ENCODE measurements at regions of chr20 and their contacts with region 1.

Region 1: GRCh38 chr20:24992487-24993205 is at the start of gene APMAP:
- DNase-seq: peak; percentile 88 to 94 (median 94)
- H3K4me3 ChIP-seq: peak within 1 kb of the TSS; percentile 55 to 89 (median 85)
- H3K4me3 Mint-ChIP-seq: peak within 1 kb of the TSS; percentile 96 to 97
- H3K27ac ChIP-seq: peak within 1 kb of the TSS; percentile 87 to 98
- H3K27ac Mint-ChIP-seq: peak within 1 kb of the TSS; percentile 94 to 98 (median 97)
- H3K4me1 ChIP-seq: peaks cover 46 to 63% of the 10 kb centered on the region in 2 donors
- H3K4me1 Mint-ChIP-seq: peaks cover 69% of the 10 kb centered on the region
- H3K27me3 ChIP-seq: no peaks in the 10 kb centered on the region
- H3K27me3 Mint-ChIP-seq: peaks cover 2 to 5% (median 5%) of the 10 kb centered on the region in 3 donors
- CTCF ChIP-seq: no peak
- polyA plus RNA-seq, gene APMAP: 26.9 to 74.0 (median 73.2) TPM

Region 2: GRCh38 chr20:25065625-25066338 is 73.1 kb after region 1 on chr20:
- intact Hi-C with region 1: loop called (anchors 1 to 2 kb)
- DNase-seq: peak; percentile 59 to 76 (median 67)
- H3K4me3 ChIP-seq: no peak overlapping the region
- H3K4me3 Mint-ChIP-seq: no peak overlapping the region
- H3K27ac ChIP-seq: no peak overlapping the region
- H3K27ac Mint-ChIP-seq: no peak overlapping the region
- H3K4me1 ChIP-seq: no peaks in the 10 kb centered on the region
- H3K4me1 Mint-ChIP-seq: peaks cover 4% of the 10 kb centered on the region
- H3K27me3 ChIP-seq: peaks cover 4 to 15% of the 10 kb centered on the region in 2 donors
- H3K27me3 Mint-ChIP-seq: peaks cover 12 to 15% (median 13%) of the 10 kb centered on the region in 3 donors
- CTCF ChIP-seq: peak; percentile 82

Region 3: GRCh38 chr20:25247956-25248785 is 255.5 kb after region 1 on chr20 and contains the start of gene PYGB:
- intact Hi-C with region 1: loop called (anchors 5 kb)
- DNase-seq: peak; percentile 84 to 85 (median 84)
- H3K4me3 ChIP-seq: peak within 1 kb of the TSS; percentile 55 to 86 (median 80)
- H3K4me3 Mint-ChIP-seq: peak within 1 kb of the TSS; percentile 95 to 96
- H3K27ac ChIP-seq: peak within 1 kb of the TSS; percentile 78 to 89
- H3K27ac Mint-ChIP-seq: peak within 1 kb of the TSS; percentile 89 to 96 (median 94)
- H3K4me1 ChIP-seq: peaks cover 20 to 24% of the 10 kb centered on the region in 2 donors
- H3K4me1 Mint-ChIP-seq: peaks cover 43% of the 10 kb centered on the region
- H3K27me3 ChIP-seq: peaks cover 0 to 2% of the 10 kb centered on the region in 2 donors
- H3K27me3 Mint-ChIP-seq: peaks cover 10 to 16% (median 12%) of the 10 kb centered on the region in 3 donors
- CTCF ChIP-seq: no peak
- polyA plus RNA-seq, gene PYGB: 26.6 to 33.2 (median 26.7) TPM

Region 4: DNA sequence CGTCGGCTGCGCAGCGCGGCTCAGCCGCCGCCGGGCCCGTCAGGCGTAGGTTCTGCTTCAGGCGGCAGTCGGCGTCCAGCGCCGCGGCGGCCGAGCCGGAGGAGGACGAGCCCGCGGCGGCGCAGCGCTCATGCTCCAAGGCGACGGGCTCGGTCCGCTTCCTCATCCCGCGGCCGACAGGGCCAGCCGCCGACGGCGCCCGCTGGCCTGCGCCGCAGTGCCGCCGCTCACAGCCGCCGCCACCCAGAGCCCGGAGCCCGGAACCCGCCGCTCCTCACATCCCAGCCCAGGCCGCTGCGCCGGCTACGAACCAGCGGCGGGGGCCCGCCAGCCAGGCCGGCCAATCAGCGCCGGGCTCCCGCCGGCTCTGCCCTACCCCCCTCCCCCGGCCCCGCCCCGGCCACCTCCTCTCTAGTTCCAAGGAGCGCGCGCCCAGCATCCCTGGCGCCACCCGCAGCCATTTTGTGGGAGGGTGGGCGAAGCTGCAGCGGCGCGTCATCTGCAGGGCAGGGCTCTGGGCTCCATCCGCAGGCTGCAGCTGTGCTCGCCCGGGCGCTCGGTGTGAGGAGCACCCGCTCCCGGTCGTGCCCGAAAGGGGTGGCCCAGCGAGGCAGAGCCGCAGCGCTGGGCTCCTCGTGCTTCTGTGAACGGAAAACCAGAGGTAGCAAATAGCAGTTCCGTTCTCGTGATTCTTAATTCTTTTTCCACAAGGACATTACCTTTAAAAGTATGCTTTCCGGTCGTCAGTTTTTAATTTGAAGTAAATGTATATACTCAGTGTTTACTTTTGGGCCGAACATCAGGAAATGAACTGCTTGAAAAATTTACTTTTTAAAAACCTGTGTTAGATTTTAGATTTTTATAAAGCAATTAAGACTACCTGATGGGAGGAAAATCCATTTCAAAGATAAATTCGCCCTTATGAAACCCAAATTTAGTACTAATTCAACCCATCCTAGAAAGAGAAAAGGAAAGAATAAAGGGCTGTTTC is 398.2 kb after region 1 on chr20 and contains the start of gene ABHD12:
- intact Hi-C with region 1: loop called in 1 of 2 experiments (anchors 10 kb)
- DNase-seq: peak; percentile 90 to 94 (median 93)
- H3K4me3 ChIP-seq: peak within 1 kb of the TSS; percentile 72 to 79 (median 79)
- H3K4me3 Mint-ChIP-seq: peak within 1 kb of the TSS; percentile 84 to 91
- H3K27ac ChIP-seq: peak within 1 kb of the TSS; percentile 64 to 86
- H3K27ac Mint-ChIP-seq: peak within 1 kb of the TSS; percentile 78 to 93 (median 89)
- H3K4me1 ChIP-seq: peaks cover 10 to 20% of the 10 kb centered on the region in 2 donors
- H3K4me1 Mint-ChIP-seq: peaks cover 12% of the 10 kb centered on the region
- H3K27me3 ChIP-seq: no peaks in the 10 kb centered on the region
- H3K27me3 Mint-ChIP-seq: peaks cover 0 to 2% (median 0%) of the 10 kb centered on the region in 3 donors
- CTCF ChIP-seq: no peak
- polyA plus RNA-seq, gene ABHD12: 20.3 to 34.5 (median 32.1) TPM

Region 5: DNA sequence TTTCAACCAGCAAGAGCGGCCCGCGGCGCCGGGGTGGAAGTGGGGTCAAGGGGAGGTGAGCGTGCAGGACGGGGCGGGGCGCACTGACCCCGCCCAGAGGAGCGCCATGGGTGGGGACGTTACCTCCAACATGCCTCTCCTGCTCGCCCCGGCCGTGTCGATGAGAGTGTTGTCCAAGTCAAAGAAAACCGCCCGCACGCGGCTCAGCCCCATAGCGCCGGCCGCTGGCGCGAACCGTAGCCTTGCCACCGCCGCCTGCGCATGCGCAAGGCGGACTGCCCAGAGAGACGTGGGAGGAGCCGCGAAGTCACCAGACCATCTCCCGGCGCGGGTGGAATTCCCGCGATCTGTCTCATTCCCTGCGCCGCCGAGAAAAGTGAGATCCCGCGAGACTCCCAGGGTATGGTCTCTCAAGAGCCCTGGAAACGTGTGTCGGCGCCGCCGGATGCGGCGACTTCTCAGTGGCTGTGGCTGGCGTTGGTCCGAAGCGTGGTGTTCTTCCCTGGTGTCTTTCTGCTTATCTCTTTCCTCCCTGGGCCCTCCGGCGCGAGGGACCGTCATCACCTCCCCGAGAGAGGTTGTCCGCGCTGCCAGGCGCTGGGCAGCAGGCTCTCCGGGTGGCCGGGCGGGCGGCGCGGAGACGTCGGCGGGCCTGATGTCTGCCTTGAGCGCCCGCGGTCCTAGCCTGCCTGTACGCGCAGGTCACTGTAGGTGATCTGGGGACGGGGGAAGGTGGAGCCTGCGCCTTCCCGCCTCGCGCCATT is 631.3 kb after region 1 on chr20 and contains the start of gene NANP:
- intact Hi-C with region 1: loop called in 1 of 2 experiments (anchors 10 kb)
- DNase-seq: peak; percentile 93 to 96 (median 94)
- H3K4me3 ChIP-seq: peak within 1 kb of the TSS; percentile 54 to 87 (median 66)
- H3K4me3 Mint-ChIP-seq: peak within 1 kb of the TSS; percentile 92 to 93
- H3K27ac ChIP-seq: peak within 1 kb of the TSS; percentile 73 to 76
- H3K27ac Mint-ChIP-seq: peak within 1 kb of the TSS; percentile 86 to 96 (median 93)
- H3K4me1 ChIP-seq: peaks cover 23 to 33% of the 10 kb centered on the region in 2 donors
- H3K4me1 Mint-ChIP-seq: peaks cover 27% of the 10 kb centered on the region
- H3K27me3 ChIP-seq: no peaks in the 10 kb centered on the region
- H3K27me3 Mint-ChIP-seq: peaks cover 2 to 6% (median 5%) of the 10 kb centered on the region in 3 donors
- CTCF ChIP-seq: no peak
- polyA plus RNA-seq, gene NANP: 1.7 to 2.6 (median 2.2) TPM